HEK293 (cell line): ENCODE measurements at regions of chr17 and their contacts with region 1.

Region 1: DNA sequence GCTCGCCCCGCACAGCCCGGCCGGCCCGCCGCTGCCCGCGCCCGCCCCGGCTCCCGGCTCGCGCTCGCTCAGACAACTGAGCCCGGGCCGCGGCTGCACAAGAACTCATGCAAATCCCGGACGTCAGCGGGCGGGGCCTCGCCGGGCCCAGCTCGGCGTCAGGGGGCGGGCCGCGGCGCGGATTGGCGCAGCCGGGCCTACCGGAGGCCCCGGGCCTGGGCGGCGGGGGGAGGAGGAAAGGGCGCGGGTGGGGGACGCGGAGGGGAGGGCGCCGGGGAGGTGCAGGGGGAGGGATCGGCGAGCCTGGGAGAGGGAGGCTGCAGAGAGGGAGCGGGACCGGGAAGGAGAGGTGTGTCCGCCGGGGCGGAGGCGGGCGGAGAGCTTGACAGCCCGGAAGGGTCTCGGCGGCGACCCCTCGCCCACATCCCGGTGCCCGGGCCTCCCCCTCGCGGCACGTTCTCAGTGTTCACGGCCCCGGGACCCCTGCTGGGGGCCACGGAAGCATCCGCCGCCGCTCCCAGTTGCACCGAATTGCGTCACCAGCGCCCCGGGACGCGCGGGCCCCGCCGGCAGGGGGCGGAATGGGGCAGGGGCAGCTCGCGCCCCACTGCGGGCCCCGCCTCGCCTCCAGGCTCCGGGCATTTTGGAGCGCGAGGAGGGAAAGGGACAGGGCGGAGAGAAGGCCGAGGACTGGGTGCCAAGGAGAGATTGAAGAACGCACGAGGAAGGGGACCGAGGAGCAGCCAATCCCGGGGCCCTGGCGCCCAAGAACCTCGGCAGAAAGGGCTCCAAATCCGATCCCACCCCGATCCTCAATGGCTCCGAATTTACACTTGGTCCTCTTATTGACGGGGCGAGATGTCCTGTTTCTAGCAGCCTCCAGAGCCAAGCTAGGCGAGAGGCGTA is at the start of gene CBX4:
- H3K4me3 ChIP-seq: peak within 1 kb of the TSS; percentile 74
- H3K27ac ChIP-seq: peak within 1 kb of the TSS; percentile 81
- H3K4me1 ChIP-seq: peaks cover 23% of the 10 kb centered on the region
- CTCF ChIP-seq: peak; percentile 99

Region 2: GRCh38 chr17:79737046-79737921 is 102.3 kb before region 1 on chr17:
- CTCF ChIA-PET with region 1: no interaction called
- POLR2A ChIA-PET with region 1: no interaction called
- H3K4me3 ChIP-seq: no peak overlapping the region
- H3K27ac ChIP-seq: no peak overlapping the region
- H3K4me1 ChIP-seq: no peaks in the 10 kb centered on the region; the same call in 1 of the 2 replicates
- CTCF ChIP-seq: no peak

Region 3: DNA sequence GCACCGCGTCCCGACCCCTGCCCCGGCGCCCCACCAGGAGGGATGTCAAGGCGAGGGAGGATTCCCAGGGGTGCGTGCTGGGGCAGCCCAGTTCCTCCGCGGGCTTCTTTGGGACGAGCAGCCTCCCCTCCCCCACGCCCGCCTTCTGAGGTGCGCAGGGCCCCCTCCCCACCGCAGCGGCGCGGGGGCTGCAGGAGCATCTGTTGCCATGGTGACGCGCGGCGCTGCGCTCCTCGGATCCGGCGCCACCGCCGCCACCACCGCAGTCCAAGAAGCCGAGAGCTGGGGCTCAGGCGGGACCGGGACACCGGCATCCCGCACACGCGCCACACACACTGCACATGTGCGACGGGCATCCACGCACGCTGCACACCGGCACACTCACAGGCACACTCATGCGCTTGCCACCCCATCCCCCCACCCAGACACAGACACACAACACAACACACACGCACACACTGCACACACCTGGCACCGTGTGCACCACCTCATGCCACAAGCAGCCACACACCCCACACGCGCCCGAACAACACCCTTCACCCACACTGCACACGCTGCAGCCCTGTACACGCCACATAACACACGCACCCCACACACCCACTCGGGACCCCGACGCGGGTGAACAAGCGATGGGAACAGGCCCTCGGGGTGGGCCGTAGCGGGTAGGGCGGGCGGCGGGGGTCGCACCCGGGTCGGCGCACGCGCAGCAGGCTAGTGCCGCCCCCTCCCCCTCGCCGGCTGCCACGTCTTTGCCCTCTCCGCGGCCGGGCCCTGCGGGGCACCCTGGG is 91.9 kb before region 1 on chr17:
- CTCF ChIA-PET with region 1: interaction called, 10 read pairs
- POLR2A ChIA-PET with region 1: interaction called, 3 read pairs
- H3K4me3 ChIP-seq: no peak overlapping the region
- H3K27ac ChIP-seq: no peak overlapping the region
- H3K4me1 ChIP-seq: peaks cover 11% of the 10 kb centered on the region
- CTCF ChIP-seq: no peak

Region 4: GRCh38 chr17:79810130-79811010 is 29.2 kb before region 1 on chr17:
- CTCF ChIA-PET with region 1: interaction called, 17 read pairs
- POLR2A ChIA-PET with region 1: interaction called, 74 read pairs
- H3K4me3 ChIP-seq: peak overlapping the region; percentile 37
- H3K27ac ChIP-seq: peak overlapping the region; percentile 76
- H3K4me1 ChIP-seq: peaks cover 17% of the 10 kb centered on the region
- CTCF ChIP-seq: no peak

Region 5: GRCh38 chr17:79826204-79826680 is 13.4 kb before region 1 on chr17:
- CTCF ChIA-PET with region 1: interaction called, 15 read pairs
- POLR2A ChIA-PET with region 1: interaction called, 32 read pairs
- H3K4me3 ChIP-seq: no peak overlapping the region
- H3K27ac ChIP-seq: no peak overlapping the region
- H3K4me1 ChIP-seq: peaks cover 11% of the 10 kb centered on the region
- CTCF ChIP-seq: no peak

Region 6: DNA sequence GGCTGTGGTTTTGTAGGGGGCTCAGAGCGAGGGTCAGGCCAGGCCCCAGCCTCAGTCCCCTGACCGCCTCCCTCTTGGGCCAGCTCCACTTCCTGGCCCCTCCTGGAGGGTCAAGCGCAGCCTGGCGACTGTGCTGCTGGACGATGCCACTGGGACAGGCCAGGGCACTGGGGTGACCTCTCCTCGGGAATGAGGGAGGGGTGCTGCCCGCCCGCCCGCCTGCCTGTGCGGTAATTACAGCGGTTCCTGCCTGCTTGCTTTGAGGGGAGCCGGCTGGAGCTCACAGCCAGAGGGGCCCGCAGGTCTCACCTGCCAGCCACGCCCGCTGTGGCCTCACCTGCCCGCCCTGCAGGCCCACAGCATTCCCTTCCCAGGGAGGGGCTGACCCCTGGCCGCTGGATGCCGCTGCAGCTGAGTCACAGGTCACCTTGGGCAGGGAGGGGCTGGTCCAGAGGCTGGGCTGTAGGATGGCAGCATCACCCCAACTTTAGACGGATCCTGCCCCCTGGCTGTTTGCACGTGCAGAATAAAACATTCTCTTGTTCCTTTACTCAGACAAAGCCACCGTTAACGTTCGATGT is 76.3 kb after region 1 on chr17:
- CTCF ChIA-PET with region 1: interaction called, 10 read pairs
- POLR2A ChIA-PET with region 1: interaction called, 6 read pairs
- H3K4me3 ChIP-seq: no peak overlapping the region
- H3K27ac ChIP-seq: no peak overlapping the region
- H3K4me1 ChIP-seq: no peaks in the 10 kb centered on the region
- CTCF ChIP-seq: no peak

Region 7: GRCh38 chr17:79947351-79948031 is 107.9 kb after region 1 on chr17:
- CTCF ChIA-PET with region 1: no interaction called
- POLR2A ChIA-PET with region 1: no interaction called
- H3K4me3 ChIP-seq: no peak overlapping the region
- H3K27ac ChIP-seq: no peak overlapping the region
- H3K4me1 ChIP-seq: no peaks in the 10 kb centered on the region
- CTCF ChIP-seq: no peak